ENCODE measurements at regions of chr21 and their contacts with region 1.

Region 1: GRCh38 chr21:33924079-33924765 is 8.6 kb upstream of the ATP5PO start:
- DNase-seq: peak; percentile 79
- H3K4me3 ChIP-seq: no peak overlapping the region; a peak in 1 of 4 replicates
- H3K27ac ChIP-seq: no peak overlapping the region; a peak in 1 of 4 replicates
- H3K4me1 ChIP-seq: peaks cover 5 to 10% of the 10 kb centered on the region in 2 experiments; a peak in 1 of 4 replicates
- H3K27me3 ChIP-seq: no peaks in the 10 kb centered on the region
- CTCF ChIP-seq: peak; percentile 92
- EP300 ChIP-seq: no peak
- RAD21 ChIP-seq: peak; percentile 99

Region 2: DNA sequence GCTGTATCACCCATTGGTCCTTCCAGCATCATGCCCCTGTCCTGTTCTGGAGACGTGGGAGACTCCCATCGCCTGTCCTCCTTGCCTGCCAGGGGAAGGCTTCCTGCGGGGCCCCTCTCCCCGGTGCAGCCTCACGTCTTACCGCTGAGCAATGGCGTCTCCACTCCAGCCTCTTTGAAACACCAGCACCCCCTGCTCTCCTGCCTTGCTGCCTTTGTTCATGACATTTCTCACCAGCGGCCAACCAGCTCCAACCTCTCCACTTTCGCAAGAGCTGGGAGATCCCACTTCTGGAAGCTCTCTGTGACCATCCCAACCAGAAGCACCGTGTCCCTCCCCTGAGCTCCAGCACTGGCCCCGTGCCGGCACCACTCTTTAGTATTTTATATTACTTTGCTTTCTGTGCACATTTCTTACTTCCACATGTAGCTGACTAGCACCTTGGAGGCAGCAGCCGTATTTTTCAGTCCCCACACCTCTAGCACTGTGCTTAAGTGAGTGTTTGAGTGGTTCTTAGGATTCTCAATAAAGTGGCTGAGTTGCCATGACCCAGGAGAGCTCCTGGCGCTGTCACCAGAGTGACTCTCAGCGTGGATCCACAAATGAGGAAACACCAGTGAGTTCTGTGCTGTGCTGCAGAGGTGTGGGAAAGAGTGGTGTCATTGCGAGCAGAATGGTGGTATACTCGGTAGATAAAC is 92.1 kb before region 1 on chr21:
- CTCF ChIA-PET with region 1: no interaction called
- POLR2A ChIA-PET with region 1: no interaction called
- DNase-seq: no peak
- H3K4me3 ChIP-seq: no peak overlapping the region
- H3K27ac ChIP-seq: no peak overlapping the region
- H3K4me1 ChIP-seq: no peaks in the 10 kb centered on the region; a peak in 1 of 4 replicates
- H3K27me3 ChIP-seq: no peaks in the 10 kb centered on the region
- CTCF ChIP-seq: no peak
- EP300 ChIP-seq: no peak
- RAD21 ChIP-seq: no peak

Region 3: GRCh38 chr21:33954395-33954794 is 30.2 kb after region 1 on chr21:
- CTCF ChIA-PET with region 1: interaction called, 26 read pairs
- POLR2A ChIA-PET with region 1: no interaction called
- DNase-seq: no peak
- H3K4me3 ChIP-seq: no peak overlapping the region
- H3K27ac ChIP-seq: no peak overlapping the region
- H3K4me1 ChIP-seq: no peaks in the 10 kb centered on the region
- H3K27me3 ChIP-seq: no peaks in the 10 kb centered on the region
- CTCF ChIP-seq: no peak
- EP300 ChIP-seq: no peak
- RAD21 ChIP-seq: no peak

Region 4: DNA sequence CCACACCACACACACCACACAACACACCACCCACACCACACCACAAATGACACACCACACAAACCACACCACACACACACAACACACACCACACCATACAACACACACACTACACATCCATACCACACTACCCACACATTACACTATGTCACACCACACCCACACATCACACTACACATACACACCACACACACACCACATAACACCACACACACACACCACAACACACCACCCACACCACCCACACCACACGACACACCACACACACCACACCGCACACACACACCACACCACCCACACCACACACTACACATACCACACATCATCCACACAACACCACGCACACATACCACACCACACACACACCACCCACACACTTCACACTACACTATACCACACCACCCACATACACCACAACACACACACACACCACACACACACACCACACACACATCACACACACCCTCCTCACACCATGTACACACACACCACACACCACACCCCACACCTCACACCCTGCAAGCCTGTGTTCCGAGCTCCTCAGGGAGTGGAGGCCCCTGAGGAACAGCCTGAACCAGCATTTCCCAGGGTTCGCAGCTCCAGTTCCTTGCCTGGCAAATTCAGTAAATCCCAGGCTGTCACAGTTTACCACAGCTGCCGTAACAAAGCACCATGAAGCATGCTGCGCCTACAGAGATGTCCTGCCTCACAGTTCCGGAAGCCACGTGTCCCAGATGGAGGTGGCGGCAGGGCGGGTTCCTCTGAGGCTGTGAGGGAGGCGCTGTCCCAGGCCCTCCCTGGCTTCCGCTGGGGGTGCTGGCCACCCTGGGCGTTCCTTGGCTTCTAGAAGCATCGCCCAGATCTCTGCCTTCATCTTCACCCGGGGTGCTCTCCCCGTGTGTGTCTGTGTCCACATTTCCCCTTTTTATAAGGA is 61.2 kb after region 1 on chr21:
- CTCF ChIA-PET with region 1: no interaction called
- POLR2A ChIA-PET with region 1: no interaction called
- DNase-seq: no peak
- H3K4me3 ChIP-seq: no peak overlapping the region
- H3K27ac ChIP-seq: no peak overlapping the region
- H3K4me1 ChIP-seq: no peaks in the 10 kb centered on the region
- H3K27me3 ChIP-seq: no peaks in the 10 kb centered on the region
- CTCF ChIP-seq: no peak
- EP300 ChIP-seq: no peak
- RAD21 ChIP-seq: no peak

Region 5: DNA sequence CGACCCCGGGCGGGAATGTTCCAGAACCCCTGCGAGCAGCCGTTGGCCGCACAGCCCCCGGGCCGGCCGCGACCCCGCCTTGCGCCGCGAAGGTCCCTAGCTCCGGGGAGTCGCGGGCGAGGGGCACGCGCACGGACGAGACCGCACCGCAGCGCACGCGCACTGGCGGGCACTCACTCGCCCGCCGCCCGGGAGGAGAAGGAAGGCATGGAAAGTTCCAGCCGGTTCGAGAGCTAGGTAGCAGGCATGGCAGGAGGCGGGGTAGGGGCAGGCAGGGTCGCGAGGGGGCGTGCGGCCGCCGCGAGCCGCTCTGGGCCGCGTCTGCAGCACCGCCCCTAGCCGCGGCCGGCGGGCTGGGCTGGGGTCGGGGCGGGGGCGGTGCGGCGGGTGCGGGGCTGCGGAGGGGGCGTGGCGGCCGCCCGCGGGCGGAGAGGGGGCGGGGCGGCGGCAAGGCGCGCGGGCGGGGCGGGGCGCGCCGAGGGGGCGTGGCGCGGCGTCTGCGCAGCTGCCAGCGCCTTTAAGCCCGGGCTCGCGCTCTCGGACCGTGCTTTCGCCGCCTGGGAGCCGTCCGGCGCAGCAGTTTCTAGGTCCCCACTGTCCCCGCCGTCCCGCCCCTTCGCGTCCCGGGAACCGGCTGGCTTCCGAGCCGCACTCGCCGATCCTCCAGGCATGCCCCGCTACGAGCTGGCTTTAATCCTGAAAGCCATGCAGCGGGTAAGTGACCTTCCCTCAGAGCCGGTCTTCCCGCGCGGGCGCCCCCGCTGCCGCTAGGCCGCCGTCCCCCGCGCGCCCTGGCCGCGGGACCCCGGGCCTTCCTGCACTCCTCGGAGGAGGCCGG is 149.0 kb after region 1 on chr21 and contains the starts of genes MRPS6 and SLC5A3:
- CTCF ChIA-PET with region 1: interaction called, 37 read pairs
- POLR2A ChIA-PET with region 1: no interaction called
- DNase-seq: peak; percentile 94
- H3K4me3 ChIP-seq: peak within 1 kb of the TSS; percentile 75 to 89
- H3K27ac ChIP-seq: peak within 1 kb of the TSS; percentile 61 to 94; a peak in 3 of 4 replicates
- H3K4me1 ChIP-seq: peaks cover 18 to 27% of the 10 kb centered on the region in 2 experiments
- H3K27me3 ChIP-seq: no peaks in the 10 kb centered on the region
- CTCF ChIP-seq: no peak
- EP300 ChIP-seq: peak in 1 of 2 experiments; percentile 74; a peak in 2 of 4 replicates
- RAD21 ChIP-seq: peak; percentile 27
- polyA plus RNA-seq, gene MRPS6: 26.8 and 69.2 TPM in 2 replicates
- polyA plus RNA-seq, gene SLC5A3: 3.0 and 3.2 TPM in 2 replicates

Region 6: GRCh38 chr21:34122047-34122446 is 197.8 kb after region 1 on chr21:
- CTCF ChIA-PET with region 1: no interaction called
- POLR2A ChIA-PET with region 1: no interaction called
- DNase-seq: no peak
- H3K4me3 ChIP-seq: no peak overlapping the region
- H3K27ac ChIP-seq: no peak overlapping the region
- H3K4me1 ChIP-seq: peaks cover 0 to 9% of the 10 kb centered on the region in 2 experiments; a peak in 2 of 4 replicates
- H3K27me3 ChIP-seq: no peaks in the 10 kb centered on the region
- CTCF ChIP-seq: no peak
- EP300 ChIP-seq: no peak
- RAD21 ChIP-seq: no peak

Region 7: GRCh38 chr21:34243562-34243961 is 319.3 kb after region 1 on chr21:
- CTCF ChIA-PET with region 1: interaction called, 27 read pairs
- POLR2A ChIA-PET with region 1: no interaction called
- DNase-seq: peak; percentile 20
- H3K4me3 ChIP-seq: no peak overlapping the region
- H3K27ac ChIP-seq: no peak overlapping the region
- H3K4me1 ChIP-seq: no peaks in the 10 kb centered on the region
- H3K27me3 ChIP-seq: no peaks in the 10 kb centered on the region
- CTCF ChIP-seq: peak; percentile 48
- EP300 ChIP-seq: no peak
- RAD21 ChIP-seq: peak; percentile 61

Region 8: GRCh38 chr21:34367321-34367935 is 443.2 kb after region 1 on chr21:
- CTCF ChIA-PET with region 1: interaction called, 407 read pairs
- POLR2A ChIA-PET with region 1: no interaction called
- DNase-seq: peak; percentile 45
- H3K4me3 ChIP-seq: peak overlapping the region in 1 of 2 experiments; percentile 27; a peak in 1 of 4 replicates
- H3K27ac ChIP-seq: no peak overlapping the region
- H3K4me1 ChIP-seq: no peaks in the 10 kb centered on the region
- H3K27me3 ChIP-seq: no peaks in the 10 kb centered on the region; the same call in 1 of the 2 replicates
- CTCF ChIP-seq: peak; percentile 82
- EP300 ChIP-seq: no peak
- RAD21 ChIP-seq: peak; percentile 55

Measured in SK-N-SH (cell line).